IMR-90 (cell line): ENCODE measurements at regions of chr6 and their contacts with region 1.

Region 1: GRCh38 chr6:143772116-143773086 is 70.7 kb upstream of the LTV1 start:
- DNase-seq: no peak
- ATAC-seq: no peak
- H3K4me3 ChIP-seq: no peak overlapping the region
- H3K27ac ChIP-seq: no peak overlapping the region
- H3K4me1 ChIP-seq: peaks cover 8% of the 10 kb centered on the region; the same call in 1 of the 2 replicates
- H3K27me3 ChIP-seq: no peaks in the 10 kb centered on the region
- CTCF ChIP-seq: no peak
- POLR2A ChIP-seq: no peak
- RAD21 ChIP-seq: no peak

Region 2: DNA sequence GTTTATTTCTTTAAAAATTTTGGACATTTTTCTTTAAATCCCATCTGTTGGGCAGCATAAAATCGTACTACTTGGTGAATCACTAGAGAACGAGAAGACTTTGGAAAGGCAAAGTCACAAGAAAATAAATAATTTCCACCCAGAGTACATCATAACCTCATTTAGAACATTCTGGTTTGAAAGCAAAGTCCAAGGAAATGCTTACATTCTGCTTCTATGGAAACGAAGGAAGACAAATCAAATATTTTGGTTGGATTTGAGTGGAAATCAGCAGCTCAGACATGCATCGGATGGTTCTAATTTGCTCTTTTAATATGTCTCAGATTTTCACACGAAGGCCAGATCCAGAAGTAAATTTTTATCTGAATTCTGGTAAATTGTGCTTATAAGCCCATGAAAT is 10.1 kb after region 1 on chr6:
- CTCF ChIA-PET with region 1: no interaction called
- POLR2A ChIA-PET with region 1: no interaction called
- dilution Hi-C with region 1: no loop called
- in situ Hi-C with region 1: no loop called
- intact Hi-C with region 1: loop called (anchors 2 kb)
- DNase-seq: no peak
- ATAC-seq: no peak
- H3K4me3 ChIP-seq: no peak overlapping the region
- H3K27ac ChIP-seq: no peak overlapping the region
- H3K4me1 ChIP-seq: no peaks in the 10 kb centered on the region
- H3K27me3 ChIP-seq: no peaks in the 10 kb centered on the region
- CTCF ChIP-seq: no peak
- POLR2A ChIP-seq: no peak
- RAD21 ChIP-seq: no peak